ENCODE measurements at regions of chr10 and their contacts with region 1.

Region 1: GRCh38 chr10:109883859-109884771 is 39.2 kb downstream of the XPNPEP1 start:
- DNase-seq: peak; percentile 83
- H3K4me3 ChIP-seq: no peak overlapping the region
- H3K27ac ChIP-seq: peak overlapping the region in 3 of 8 donors; percentile 10 to 49 (median 31)
- H3K4me1 ChIP-seq: peaks cover 0 to 15% (median 9%) of the 10 kb centered on the region in 6 donors
- H3K27me3 ChIP-seq: no peaks in the 10 kb centered on the region
- CTCF ChIP-seq: peak; percentile 75 to 94 (median 93)
- POLR2A ChIP-seq: no peak

Region 2: GRCh38 chr10:109934958-109935706 is 51.0 kb after region 1 on chr10:
- intact Hi-C with region 1: no loop called
- DNase-seq: no peak
- H3K4me3 ChIP-seq: peak overlapping the region in 1 of 8 donors; percentile 16
- H3K27ac ChIP-seq: peak overlapping the region; percentile 27 to 83 (median 68)
- H3K4me1 ChIP-seq: peaks cover 8 to 46% (median 26%) of the 10 kb centered on the region in 6 donors
- H3K27me3 ChIP-seq: no peaks in the 10 kb centered on the region
- CTCF ChIP-seq: no peak
- POLR2A ChIP-seq: no peak

Region 3: GRCh38 chr10:110279407-110279986 is 395.4 kb after region 1 on chr10:
- intact Hi-C with region 1: loop called (anchors 10 kb)
- DNase-seq: no peak
- H3K4me3 ChIP-seq: peak overlapping the region in 1 of 8 donors; percentile 9
- H3K27ac ChIP-seq: no peak overlapping the region
- H3K4me1 ChIP-seq: peaks cover 6 to 36% (median 10%) of the 10 kb centered on the region in 6 donors
- H3K27me3 ChIP-seq: no peaks in the 10 kb centered on the region
- CTCF ChIP-seq: peak; percentile 37 to 81 (median 71)
- POLR2A ChIP-seq: no peak